T-cell (primary cell): ENCODE measurements at regions of chr16 and their contacts with region 1.

Region 1: GRCh38 chr16:57169327-57169726 is 16.5 kb downstream of the PSME3IP1 start:
- DNase-seq: no peak
- ATAC-seq: no peak
- H3K4me3 ChIP-seq: no peak overlapping the region
- H3K4me3 Mint-ChIP-seq: no peak overlapping the region
- H3K27ac ChIP-seq: no peak overlapping the region
- H3K27ac Mint-ChIP-seq: no peak overlapping the region
- H3K4me1 ChIP-seq: no peaks in the 10 kb centered on the region
- H3K4me1 Mint-ChIP-seq: peaks cover 12 to 13% (median 12%) of the 10 kb centered on the region in 3 donors
- H3K27me3 ChIP-seq: no peaks in the 10 kb centered on the region
- H3K27me3 Mint-ChIP-seq: no peaks in the 10 kb centered on the region

Region 2: DNA sequence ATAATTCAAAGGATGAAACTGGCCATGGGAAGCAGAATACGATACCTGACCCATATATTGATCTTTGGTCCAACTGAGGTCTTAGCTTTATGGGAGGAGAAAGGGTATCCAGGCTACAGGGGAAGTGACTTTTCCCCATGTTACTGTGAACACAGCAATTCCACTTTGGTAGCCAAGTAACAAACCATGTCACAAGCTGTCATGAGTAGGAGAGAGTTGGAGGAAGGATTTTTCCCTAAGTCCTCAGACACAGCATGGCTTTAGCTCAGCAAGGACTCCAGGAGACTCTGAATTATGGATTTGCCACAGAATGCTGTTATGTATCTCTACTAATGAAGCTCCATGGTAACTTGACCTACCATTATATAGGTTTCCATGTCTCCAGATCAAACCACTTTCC is 1034.5 kb before region 1 on chr16:
- CTCF ChIA-PET with region 1: no interaction called
- POLR2A ChIA-PET with region 1: no interaction called
- DNase-seq: no peak
- ATAC-seq: no peak
- H3K4me3 ChIP-seq: no peak overlapping the region
- H3K4me3 Mint-ChIP-seq: no peak overlapping the region
- H3K27ac ChIP-seq: no peak overlapping the region
- H3K27ac Mint-ChIP-seq: no peak overlapping the region
- H3K4me1 ChIP-seq: no peaks in the 10 kb centered on the region
- H3K4me1 Mint-ChIP-seq: peaks cover 5 to 8% (median 7%) of the 10 kb centered on the region in 3 donors
- H3K27me3 ChIP-seq: peaks cover 0 to 2% of the 10 kb centered on the region in 2 experiments
- H3K27me3 Mint-ChIP-seq: peaks cover 13 to 19% of the 10 kb centered on the region in 2 donors

Region 3: GRCh38 chr16:57132470-57132869 is 36.9 kb before region 1 on chr16:
- CTCF ChIA-PET with region 1: no interaction called
- POLR2A ChIA-PET with region 1: interaction called in 1 of 2 experiments, 15 read pairs
- DNase-seq: no peak
- ATAC-seq: no peak
- H3K4me3 ChIP-seq: peak overlapping the region in 1 of 2 donors; percentile 15
- H3K4me3 Mint-ChIP-seq: peak overlapping the region in 2 of 3 donors; percentile 21 to 62
- H3K27ac ChIP-seq: peak overlapping the region; percentile 72
- H3K27ac Mint-ChIP-seq: peak overlapping the region; percentile 94 to 99
- H3K4me1 ChIP-seq: peaks cover 47 to 99% of the 10 kb centered on the region in 2 experiments
- H3K4me1 Mint-ChIP-seq: peaks cover 80 to 86% (median 83%) of the 10 kb centered on the region in 3 donors
- H3K27me3 ChIP-seq: no peaks in the 10 kb centered on the region
- H3K27me3 Mint-ChIP-seq: no peaks in the 10 kb centered on the region

Region 4: DNA sequence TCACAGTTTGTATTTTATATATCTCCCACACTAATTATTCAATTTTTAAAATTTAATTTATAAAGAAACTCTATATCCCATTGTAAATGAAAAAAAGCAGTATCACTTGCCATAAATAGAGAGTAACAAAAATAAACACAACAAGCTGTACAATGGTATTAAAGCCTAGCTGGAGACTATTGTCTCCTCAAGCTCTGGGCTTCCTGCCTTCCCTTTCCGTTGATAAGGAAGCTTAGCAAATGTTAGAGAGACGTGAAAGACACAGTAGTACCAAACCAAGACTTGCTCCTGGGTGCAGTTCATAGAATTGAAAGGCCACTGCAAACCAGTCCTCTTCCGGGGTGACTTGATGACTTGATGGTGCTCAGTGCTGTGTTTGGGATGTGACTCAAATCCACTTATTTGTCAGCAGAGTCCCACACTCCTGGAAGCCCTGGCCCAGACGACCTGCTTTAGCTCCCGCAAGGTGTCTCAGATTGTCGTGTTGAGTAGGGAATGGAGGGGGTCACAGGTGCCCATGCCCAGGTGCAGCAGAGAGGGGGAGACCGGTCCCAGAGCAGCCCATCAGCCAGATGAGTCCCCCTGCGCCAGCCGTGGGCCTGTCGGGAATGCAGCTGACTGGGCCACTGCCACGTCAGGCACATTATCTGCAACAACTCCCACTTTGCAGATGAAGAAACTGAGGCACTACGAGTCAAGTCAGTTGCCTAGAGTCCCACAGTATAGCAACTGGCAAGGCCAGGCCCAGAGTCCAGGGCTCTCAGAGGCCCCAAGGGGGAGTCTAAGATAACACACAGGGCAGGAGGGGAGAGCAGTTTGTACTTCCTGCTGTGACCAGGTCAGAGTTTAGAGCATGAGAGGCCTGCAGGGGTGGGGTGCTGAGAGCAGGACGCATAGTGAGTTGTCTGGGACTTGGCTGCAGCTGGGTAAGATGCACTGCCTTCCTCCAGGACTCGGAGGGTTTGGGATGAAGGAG is 24.0 kb before region 1 on chr16:
- CTCF ChIA-PET with region 1: no interaction called
- POLR2A ChIA-PET with region 1: no interaction called
- DNase-seq: no peak
- ATAC-seq: no peak
- H3K4me3 ChIP-seq: no peak overlapping the region
- H3K4me3 Mint-ChIP-seq: no peak overlapping the region
- H3K27ac ChIP-seq: no peak overlapping the region
- H3K27ac Mint-ChIP-seq: no peak overlapping the region
- H3K4me1 ChIP-seq: peaks cover 35 to 56% of the 10 kb centered on the region in 2 experiments
- H3K4me1 Mint-ChIP-seq: peaks cover 38 to 58% (median 51%) of the 10 kb centered on the region in 3 donors
- H3K27me3 ChIP-seq: peaks cover 0 to 3% of the 10 kb centered on the region in 2 experiments
- H3K27me3 Mint-ChIP-seq: no peaks in the 10 kb centered on the region

Region 5: DNA sequence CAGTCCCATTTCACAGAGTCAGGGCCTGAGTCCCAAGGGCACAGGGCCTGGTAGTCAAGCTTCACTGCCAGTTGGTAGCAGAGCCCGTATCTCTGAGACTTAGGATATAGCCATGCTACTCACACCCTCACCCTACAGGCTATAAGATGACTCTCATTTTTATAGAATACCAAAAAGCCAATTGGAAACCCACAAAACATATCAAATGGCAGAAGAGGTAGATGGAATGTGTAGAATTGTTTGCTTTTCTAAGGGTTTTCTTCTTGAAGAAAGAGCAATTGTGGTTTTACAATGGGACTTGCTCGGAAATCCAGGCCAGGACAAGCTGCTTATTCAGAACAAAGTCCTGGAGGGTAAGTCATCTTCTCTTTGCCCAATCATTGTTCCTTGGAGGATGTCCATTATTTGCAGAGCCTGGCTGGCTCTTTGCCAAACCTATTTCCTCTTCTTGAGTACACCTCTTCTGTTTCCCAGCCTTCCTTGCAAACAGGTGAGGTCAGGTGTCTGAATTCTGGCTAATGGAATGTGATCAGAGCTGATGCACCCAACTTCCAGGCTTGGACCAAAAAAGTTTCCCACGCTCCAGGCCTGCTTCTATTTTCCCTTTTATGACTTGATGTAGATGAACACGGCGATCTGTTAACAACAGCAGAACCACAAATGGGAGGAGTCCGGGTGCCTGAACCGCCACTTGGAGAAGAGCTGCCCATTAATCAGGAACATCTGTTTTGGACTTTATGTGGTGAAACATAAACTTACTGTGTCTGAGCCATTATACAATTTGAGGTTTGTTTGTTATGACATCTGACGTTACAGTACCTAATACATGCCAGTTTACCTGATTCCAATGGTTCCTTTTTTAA is 172.3 kb after region 1 on chr16:
- CTCF ChIA-PET with region 1: no interaction called
- POLR2A ChIA-PET with region 1: no interaction called
- DNase-seq: no peak
- ATAC-seq: no peak
- H3K4me3 ChIP-seq: no peak overlapping the region
- H3K4me3 Mint-ChIP-seq: no peak overlapping the region
- H3K27ac ChIP-seq: no peak overlapping the region
- H3K27ac Mint-ChIP-seq: no peak overlapping the region
- H3K4me1 ChIP-seq: peaks cover 4 to 6% of the 10 kb centered on the region in 2 experiments
- H3K4me1 Mint-ChIP-seq: peaks cover 10 to 21% (median 11%) of the 10 kb centered on the region in 3 donors
- H3K27me3 ChIP-seq: peaks cover 0 to 26% of the 10 kb centered on the region in 2 experiments
- H3K27me3 Mint-ChIP-seq: peaks cover 31 to 59% of the 10 kb centered on the region in 2 donors

Region 6: DNA sequence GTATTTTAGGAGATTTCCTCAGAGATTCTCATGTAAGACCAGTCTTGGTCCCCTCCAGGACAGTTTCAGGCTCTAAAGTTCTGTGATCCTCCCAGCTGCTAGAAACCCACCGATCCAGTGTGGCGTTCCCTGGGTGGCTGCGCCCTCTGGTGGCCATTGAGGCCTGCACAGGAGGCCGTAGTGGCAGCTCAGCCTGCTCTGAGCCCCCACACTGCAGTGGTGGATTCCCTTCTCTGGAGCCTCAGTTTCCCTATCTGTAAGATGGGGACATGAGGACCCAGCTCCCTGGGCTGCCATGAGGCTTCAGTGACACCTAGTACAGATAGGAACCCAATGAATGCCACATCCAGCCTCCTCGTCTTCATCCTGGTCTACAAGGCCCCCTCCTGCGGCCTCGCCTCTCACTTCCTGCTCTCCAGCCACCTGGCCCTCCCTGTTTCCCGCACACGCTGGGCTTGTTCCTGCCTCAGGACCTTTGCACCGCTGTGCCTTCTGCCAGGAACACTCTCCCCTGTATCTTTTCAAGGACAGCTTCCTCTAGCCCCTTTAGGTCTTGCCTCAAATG is 350.6 kb after region 1 on chr16:
- CTCF ChIA-PET with region 1: no interaction called
- POLR2A ChIA-PET with region 1: no interaction called
- DNase-seq: peak; percentile 41 to 88 (median 75)
- ATAC-seq: peak; percentile 90 to 99 (median 94)
- H3K4me3 ChIP-seq: no peak overlapping the region
- H3K4me3 Mint-ChIP-seq: no peak overlapping the region
- H3K27ac ChIP-seq: no peak overlapping the region
- H3K27ac Mint-ChIP-seq: no peak overlapping the region
- H3K4me1 ChIP-seq: peaks cover 0 to 8% of the 10 kb centered on the region in 2 experiments
- H3K4me1 Mint-ChIP-seq: peaks cover 5 to 11% (median 7%) of the 10 kb centered on the region in 3 donors
- H3K27me3 ChIP-seq: no peaks in the 10 kb centered on the region
- H3K27me3 Mint-ChIP-seq: no peaks in the 10 kb centered on the region